ENCODE measurements at regions of chr20 and their contacts with region 1.

Region 1: GRCh38 chr20:3156811-3157619 is 2.6 kb downstream of the FASTKD5 start:
- DNase-seq: no peak
- H3K4me3 Mint-ChIP-seq: peak overlapping the region; percentile 78
- H3K27ac Mint-ChIP-seq: peak overlapping the region; percentile 90
- H3K4me1 Mint-ChIP-seq: peaks cover 44% of the 10 kb centered on the region
- H3K27me3 Mint-ChIP-seq: no peaks in the 10 kb centered on the region

Region 2: GRCh38 chr20:3010985-3011723 is 145.9 kb before region 1 on chr20:
- intact Hi-C with region 1: no loop called
- DNase-seq: no peak
- H3K4me3 Mint-ChIP-seq: no peak overlapping the region
- H3K27ac Mint-ChIP-seq: peak overlapping the region; percentile 85
- H3K4me1 Mint-ChIP-seq: peaks cover 46% of the 10 kb centered on the region
- H3K27me3 Mint-ChIP-seq: no peaks in the 10 kb centered on the region

Region 3: DNA sequence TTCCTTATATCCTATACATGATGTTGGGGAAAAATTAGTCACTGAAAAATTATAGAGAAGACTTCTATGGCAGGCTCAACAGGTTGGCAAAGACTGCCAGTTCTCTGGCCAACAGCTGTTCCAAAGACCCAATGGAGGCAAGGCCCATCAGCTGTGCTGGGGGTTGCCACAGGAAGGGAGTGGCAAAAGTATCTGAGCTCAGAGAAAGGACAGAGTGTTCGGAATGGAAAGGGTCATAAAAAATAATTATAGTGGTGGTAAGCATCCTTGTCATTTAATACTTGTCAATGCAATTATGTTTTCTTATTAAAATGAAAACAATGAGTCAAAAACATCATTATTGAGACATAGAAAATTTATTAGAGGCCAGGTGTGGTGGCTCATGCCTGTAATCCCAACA is 33.5 kb before region 1 on chr20:
- intact Hi-C with region 1: loop called (anchors 2 kb)
- DNase-seq: no peak
- H3K4me3 Mint-ChIP-seq: no peak overlapping the region
- H3K27ac Mint-ChIP-seq: peak overlapping the region; percentile 67
- H3K4me1 Mint-ChIP-seq: peaks cover 33% of the 10 kb centered on the region
- H3K27me3 Mint-ChIP-seq: no peaks in the 10 kb centered on the region

Region 4: DNA sequence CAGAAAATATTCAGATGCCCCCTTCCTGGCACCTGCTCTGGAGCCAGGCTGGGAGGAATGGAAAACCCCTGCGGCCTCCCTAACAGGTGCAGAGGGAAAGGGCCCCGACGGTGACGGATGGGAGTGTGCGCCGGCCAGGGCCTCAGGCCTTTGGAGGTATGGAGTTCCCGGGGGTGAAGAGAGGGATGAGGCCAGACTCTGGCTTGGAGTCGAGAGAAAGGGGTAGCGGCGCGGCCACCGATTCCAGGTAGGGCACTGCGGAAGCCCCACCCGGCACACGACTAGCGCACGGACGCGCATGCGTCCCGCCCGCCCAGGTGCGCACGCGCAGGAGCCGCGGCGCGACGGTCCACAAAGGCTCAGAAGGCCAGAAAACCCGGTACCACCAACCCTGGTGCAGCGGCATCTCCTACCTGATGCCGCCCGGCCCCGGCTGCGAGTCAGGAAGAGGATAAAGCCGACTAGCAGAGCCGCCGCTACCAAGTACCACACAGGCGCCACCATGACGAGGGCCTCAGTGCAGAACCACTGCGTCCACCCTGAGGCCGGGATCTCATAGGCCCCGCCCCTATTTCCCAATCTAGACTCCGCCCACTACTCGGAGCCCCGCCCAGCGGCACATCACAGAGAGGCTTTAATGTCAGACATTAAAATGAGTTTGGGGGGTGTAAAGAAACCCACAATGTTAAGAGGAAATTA is 47.3 kb after region 1 on chr20 and contains the start of gene DDRGK1:
- intact Hi-C with region 1: loop called (anchors 1 kb)
- DNase-seq: peak; percentile 86
- H3K4me3 Mint-ChIP-seq: peak within 1 kb of the TSS; percentile 96
- H3K27ac Mint-ChIP-seq: peak within 1 kb of the TSS; percentile 97
- H3K4me1 Mint-ChIP-seq: peaks cover 23% of the 10 kb centered on the region
- H3K27me3 Mint-ChIP-seq: no peaks in the 10 kb centered on the region
- total RNA-seq, gene DDRGK1: 67.5 and 72.3 TPM in 2 replicates

Region 5: DNA sequence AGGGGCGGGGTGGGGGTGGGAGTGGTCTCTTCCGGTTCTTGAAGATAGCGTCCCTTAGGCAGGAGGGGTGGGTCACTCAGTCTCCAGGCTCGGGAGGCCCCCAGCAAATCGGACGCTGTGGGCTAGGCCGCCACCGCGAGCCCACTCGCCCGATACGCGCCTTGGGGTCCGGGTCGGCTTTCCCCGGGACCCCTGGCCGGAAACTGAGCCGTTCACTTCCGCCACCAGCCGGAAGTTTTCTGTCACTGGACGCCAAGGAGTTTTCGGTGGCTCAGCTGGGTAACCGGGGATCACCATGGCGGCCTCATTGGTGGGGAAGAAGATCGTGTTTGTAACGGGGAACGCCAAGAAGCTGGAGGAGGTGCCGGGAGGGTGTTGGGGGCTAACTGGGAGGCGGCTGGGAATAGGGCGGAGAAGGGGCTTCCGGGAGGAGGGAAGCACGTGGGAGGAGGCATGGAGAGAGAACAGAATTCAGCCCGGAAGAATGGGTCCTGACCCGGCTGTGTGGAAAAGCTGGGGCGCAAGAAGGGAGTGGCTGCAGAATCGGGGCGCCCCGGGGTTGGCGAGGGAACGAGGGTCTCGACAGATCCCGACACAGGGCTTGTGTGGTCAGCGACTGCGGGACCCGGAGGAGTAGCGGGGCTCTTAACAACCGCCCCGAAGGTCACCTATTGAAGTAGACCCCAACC is 52.4 kb after region 1 on chr20 and contains the start of gene ITPA:
- intact Hi-C with region 1: loop called (anchors 1 kb)
- DNase-seq: peak; percentile 58
- H3K4me3 Mint-ChIP-seq: peak within 1 kb of the TSS; percentile 97
- H3K27ac Mint-ChIP-seq: peak within 1 kb of the TSS; percentile 93
- H3K4me1 Mint-ChIP-seq: peaks cover 12% of the 10 kb centered on the region
- H3K27me3 Mint-ChIP-seq: no peaks in the 10 kb centered on the region
- total RNA-seq, gene ITPA: 93.3 and 96.0 TPM in 2 replicates

Measured in activated T-helper 1 cell treated with anti-CD3 and anti-CD28 coated beads, Interleukin-12 subunit alpha, Interleukin-12 subunit beta, Interleukin-2, Interleukin-4 antibody, amounts not matched to agents 30 ng/mL and 10 ng/mL and 1 ng/mL, durations not matched to agents 14 hours and 24 hours and 36 hours (primary cell).